ENCODE measurements at regions of chr2 and their contacts with region 1.

Region 1: GRCh38 chr2:120680136-120680761 is 55.4 kb upstream of the GLI2 start:
- DNase-seq: peak; percentile 76 to 91
- ATAC-seq: peak; percentile 71 to 91
- H3K4me3 ChIP-seq: no peak overlapping the region
- H3K27ac ChIP-seq: no peak overlapping the region
- H3K4me1 ChIP-seq: no peaks in the 10 kb centered on the region
- CTCF ChIP-seq: peak; percentile 57
- EP300 ChIP-seq: no peak
- POLR2A ChIP-seq: no peak
- RAD21 ChIP-seq: peak; percentile 90 to 94

Region 2: DNA sequence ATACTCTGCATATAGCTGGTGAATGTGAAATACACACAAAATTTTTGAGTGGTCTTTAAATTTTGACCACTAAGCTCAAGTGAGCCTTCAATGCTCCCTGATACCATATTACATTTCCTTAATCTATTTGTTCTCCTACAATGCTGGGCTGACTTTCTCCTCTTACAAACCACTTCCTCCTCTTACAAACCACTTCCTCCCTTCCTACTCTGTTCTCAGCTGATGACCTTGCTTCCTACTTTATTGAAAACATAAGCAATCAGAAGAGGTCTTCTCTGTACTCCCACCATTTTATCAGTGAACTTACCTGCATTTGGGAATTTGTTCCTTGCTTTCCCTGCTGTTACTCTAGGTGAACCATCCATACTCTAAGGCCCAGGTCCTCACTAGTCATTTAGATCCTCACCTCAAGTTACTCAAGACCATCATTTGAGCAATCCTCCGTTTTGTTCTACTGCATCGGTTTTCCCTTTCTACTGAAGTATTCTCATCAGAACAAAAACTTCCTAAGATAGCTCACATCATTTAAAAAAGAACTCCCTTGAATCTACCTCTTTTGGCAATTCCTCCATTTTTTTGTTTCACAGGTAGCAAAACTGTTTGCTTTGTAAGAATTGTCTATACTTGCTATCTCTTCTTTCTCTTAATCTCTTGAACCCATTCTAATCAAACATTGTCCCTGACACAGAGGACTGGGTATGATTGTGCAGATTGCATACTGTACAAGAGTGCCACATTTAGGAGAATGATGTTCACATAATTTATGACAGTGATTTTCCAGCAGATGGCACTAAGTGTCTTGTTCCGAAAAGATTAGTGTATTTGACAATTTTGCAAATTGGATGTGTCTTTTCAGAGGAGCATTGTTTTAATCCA is 570.8 kb before region 1 on chr2:
- CTCF ChIA-PET with region 1: interaction called, 16 read pairs
- POLR2A ChIA-PET with region 1: no interaction called
- DNase-seq: peak; percentile 33 to 54
- ATAC-seq: peak; percentile 66 to 83; a peak in 5 of 6 replicates
- H3K4me3 ChIP-seq: no peak overlapping the region
- H3K27ac ChIP-seq: peak overlapping the region in 1 of 2 experiments; percentile 22; a peak in 1 of 6 replicates
- H3K4me1 ChIP-seq: peaks cover 18% of the 10 kb centered on the region; the same call in 2 of the 3 replicates
- CTCF ChIP-seq: peak; percentile 81
- EP300 ChIP-seq: no peak
- POLR2A ChIP-seq: no peak
- RAD21 ChIP-seq: peak; percentile 78 to 84

Region 3: DNA sequence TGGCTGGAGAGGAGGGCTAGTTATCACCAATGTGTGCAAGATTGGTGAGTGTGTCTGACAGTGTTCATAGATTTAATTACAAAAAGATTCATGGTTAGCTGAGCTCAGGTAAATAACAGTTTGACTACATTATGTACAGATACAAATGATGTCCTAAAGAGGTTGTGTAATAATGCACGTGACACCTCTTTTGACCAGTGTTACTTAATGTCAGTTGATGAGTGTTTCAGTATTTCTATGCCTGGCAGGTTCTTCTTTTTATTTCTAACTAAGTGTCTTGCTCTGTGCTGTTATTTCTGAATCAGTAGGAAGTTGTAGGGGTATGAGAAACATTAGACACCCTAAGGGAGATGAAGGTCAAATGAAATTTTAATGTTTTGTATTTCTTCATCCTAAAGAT is 342.2 kb before region 1 on chr2:
- CTCF ChIA-PET with region 1: interaction called, 182 read pairs
- POLR2A ChIA-PET with region 1: no interaction called
- DNase-seq: no peak
- ATAC-seq: no peak
- H3K4me3 ChIP-seq: no peak overlapping the region
- H3K27ac ChIP-seq: no peak overlapping the region
- H3K4me1 ChIP-seq: peaks cover 2% of the 10 kb centered on the region
- CTCF ChIP-seq: no peak
- EP300 ChIP-seq: no peak
- POLR2A ChIP-seq: no peak
- RAD21 ChIP-seq: no peak

Region 4: GRCh38 chr2:120669121-120669952 is 10.9 kb before region 1 on chr2:
- CTCF ChIA-PET with region 1: interaction called, 23 read pairs
- POLR2A ChIA-PET with region 1: no interaction called
- DNase-seq: peak in 1 of 2 experiments; percentile 26
- ATAC-seq: peak; percentile 55 to 79; a peak in 4 of 6 replicates
- H3K4me3 ChIP-seq: no peak overlapping the region
- H3K27ac ChIP-seq: 0 out of 6 replicates have a peak overlapping the region, but pooled peaks of 1 of the 2 experiments have one; percentile 10
- H3K4me1 ChIP-seq: 0 out of 3 replicates have a peak, but pooled peaks cover 5% of the 10 kb centered on the region
- CTCF ChIP-seq: no peak
- EP300 ChIP-seq: no peak
- POLR2A ChIP-seq: no peak
- RAD21 ChIP-seq: no peak